Sciatic nerve (tissue), 2 donors: ENCODE measurements at regions of chrX and their contacts with region 1.

Region 1: GRCh38 chrX:43878883-43879526 is 3.2 kb downstream of the MAOB start:
- DNase-seq: no peak
- ATAC-seq: peak; percentile 23

Region 2: GRCh38 chrX:43849173-43849572 is 29.8 kb before region 1 on chrX:
- intact Hi-C with region 1: no loop called
- DNase-seq: no peak
- ATAC-seq: no peak

Region 3: GRCh38 chrX:43899878-43900815 is 21.1 kb after region 1 on chrX:
- intact Hi-C with region 1: no loop called
- DNase-seq: no peak
- ATAC-seq: no peak

Region 4: GRCh38 chrX:43949669-43950068 is 70.7 kb after region 1 on chrX:
- intact Hi-C with region 1: no loop called
- DNase-seq: no peak
- ATAC-seq: peak; percentile 28

Region 5: DNA sequence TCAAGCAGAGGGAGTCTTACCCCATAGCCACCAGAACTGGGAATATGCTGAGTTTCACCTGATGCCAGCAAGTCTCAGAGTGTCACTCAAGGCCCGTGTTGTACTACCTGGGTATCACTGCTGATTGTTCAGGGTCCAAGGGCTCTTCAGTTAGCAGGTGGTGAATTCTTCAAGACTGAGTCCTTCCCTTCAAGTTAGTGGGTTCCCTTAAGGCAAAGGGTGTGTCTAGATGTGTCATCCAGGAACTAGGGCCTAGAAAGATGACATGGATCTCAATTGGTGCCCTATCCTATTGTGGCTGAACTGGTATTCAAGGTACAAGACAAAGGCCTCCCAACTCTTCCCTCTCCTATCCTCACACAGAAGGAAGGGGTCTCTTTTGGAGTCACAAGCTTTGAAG is 1481.6 kb after region 1 on chrX:
- intact Hi-C with region 1: no loop called
- DNase-seq: no peak
- ATAC-seq: no peak

Region 6: DNA sequence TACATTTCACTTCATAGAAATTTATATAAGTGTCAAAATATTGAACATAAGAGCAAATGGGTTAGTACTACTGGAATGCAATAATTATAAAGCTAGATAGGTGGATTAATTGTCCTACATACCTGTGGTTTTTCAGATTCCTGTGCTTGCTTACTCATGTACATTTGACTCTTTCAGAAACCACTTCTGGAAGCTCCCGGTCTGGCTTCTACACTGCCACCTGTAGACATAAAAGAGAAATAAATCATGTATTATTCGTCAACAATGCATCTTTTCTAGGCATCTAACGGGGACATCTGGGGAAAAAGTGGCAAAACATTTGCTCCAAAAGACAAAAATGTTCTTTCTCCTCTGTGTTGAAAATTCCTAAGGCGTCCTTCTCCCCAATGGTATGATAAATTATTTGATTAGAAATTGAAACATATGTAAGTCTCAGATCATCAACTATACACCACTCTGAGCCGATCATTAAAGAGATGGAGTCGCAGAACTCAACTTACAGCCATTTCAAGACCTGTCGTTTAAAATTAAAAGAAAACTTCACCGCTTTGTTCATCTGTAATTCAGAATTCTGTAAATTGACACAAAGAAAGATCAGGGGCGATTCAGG is 1970.4 kb after region 1 on chrX:
- intact Hi-C with region 1: loop called (anchors 5 kb)
- DNase-seq: no peak
- ATAC-seq: no peak